GM12878 (cell line): ENCODE measurements at regions of chr5 and their contacts with region 1.

Region 1: DNA sequence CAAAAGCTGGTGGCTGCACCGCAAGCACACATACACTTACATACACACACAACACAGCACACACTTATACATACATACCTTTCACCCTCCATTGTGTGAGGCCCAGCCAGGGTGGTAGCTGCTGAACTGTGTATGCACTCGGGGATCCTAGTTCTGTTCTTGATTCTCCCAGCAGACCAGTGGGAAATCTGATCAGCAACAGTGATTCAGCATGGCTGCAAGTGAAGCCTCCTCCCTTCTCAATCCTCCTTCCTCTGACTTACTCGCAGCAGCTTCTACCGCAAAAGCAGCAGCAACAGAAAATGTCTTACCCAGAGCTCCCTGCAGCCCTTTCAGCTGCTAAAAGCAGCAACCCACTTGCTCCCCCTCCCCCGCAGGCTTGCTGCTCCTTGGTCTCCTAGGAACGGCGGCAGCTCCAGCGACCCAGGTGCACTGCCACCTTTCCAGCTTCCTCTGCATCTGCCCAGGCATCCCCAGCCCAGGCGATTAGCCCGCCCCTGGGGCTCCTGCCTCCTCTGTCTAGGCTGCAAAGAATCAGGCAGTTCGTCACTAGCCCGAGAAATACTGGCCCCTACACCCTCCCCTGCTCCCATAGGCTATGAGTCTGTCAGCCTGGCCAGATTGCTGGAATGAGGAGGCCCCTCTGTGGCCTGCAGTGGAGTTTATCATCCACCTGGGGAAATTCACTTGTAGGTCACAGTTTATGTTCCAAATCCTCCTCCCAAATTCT is at the start of gene KLHL3:
- DNase-seq: no peak
- ATAC-seq: peak; percentile 74
- H3K4me3 ChIP-seq: peak within 1 kb of the TSS; percentile 61
- H3K27ac ChIP-seq: peak within 1 kb of the TSS; percentile 86
- H3K4me1 ChIP-seq: peaks cover 15% of the 10 kb centered on the region
- H3K27me3 ChIP-seq: no peaks in the 10 kb centered on the region
- CTCF ChIP-seq: peak; percentile 7 to 44 (median 17); a peak in 3 of 6 replicates
- EP300 ChIP-seq: no peak
- POLR2A ChIP-seq: peak; percentile 52
- RAD21 ChIP-seq: peak; percentile 69
- polyA plus RNA-seq, gene KLHL3: 1.7 to 2.3 TPM

Region 2: DNA sequence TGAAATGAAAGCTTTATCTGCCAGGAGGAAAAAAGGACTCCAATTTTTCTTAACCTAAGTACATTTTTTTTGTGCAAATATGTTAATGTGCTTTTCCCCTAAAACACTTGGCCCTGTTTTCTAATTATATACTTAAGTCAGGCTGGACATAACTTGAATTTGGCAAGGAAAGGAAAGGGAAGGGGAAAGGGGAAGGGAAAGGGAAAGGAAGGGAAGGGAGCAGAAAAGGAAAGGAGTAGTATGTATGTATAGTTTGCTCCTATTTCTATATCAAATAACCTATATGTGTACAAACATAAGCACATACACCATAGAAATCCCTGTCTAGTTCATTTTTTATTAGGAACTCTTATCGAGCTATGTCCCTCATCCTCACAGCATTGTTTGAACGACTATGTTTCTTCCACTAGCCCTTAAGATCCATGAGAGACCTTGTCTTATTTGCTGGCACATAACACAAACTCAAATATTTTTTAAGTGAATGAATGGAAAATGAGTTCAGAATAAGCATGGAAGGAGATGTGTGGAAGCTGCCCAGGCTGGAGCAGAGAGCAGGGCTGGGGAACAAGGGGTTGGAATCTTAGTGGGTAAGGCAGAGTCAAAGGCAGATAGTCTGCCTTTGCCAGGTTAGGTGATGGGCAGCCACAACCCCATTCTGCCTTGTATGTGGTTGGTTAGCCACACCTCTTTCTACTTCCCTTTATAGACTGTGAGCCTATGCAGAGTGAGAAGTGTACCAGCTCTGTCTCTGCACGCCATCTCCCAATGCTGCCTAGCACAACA is 69.9 kb before region 1 on chr5:
- CTCF ChIA-PET with region 1: interaction called, 619 read pairs
- POLR2A ChIA-PET with region 1: interaction called, 3 read pairs
- RAD21 ChIA-PET with region 1: interaction called, 168 read pairs
- SMC1A ChIA-PET with region 1: interaction called, 155 read pairs
- in situ Hi-C with region 1: no loop called
- intact Hi-C with region 1: no loop called
- DNase-seq: peak; percentile 58
- ATAC-seq: peak; percentile 100
- H3K4me3 ChIP-seq: no peak overlapping the region
- H3K27ac ChIP-seq: peak overlapping the region; percentile 29
- H3K4me1 ChIP-seq: peaks cover 14% of the 10 kb centered on the region
- H3K27me3 ChIP-seq: no peaks in the 10 kb centered on the region
- CTCF ChIP-seq: no peak
- EP300 ChIP-seq: no peak
- POLR2A ChIP-seq: no peak
- RAD21 ChIP-seq: no peak

Region 3: GRCh38 chr5:139232147-139232724 is 1496.5 kb after region 1 on chr5:
- CTCF ChIA-PET with region 1: no interaction called
- POLR2A ChIA-PET with region 1: no interaction called
- RAD21 ChIA-PET with region 1: no interaction called
- SMC1A ChIA-PET with region 1: no interaction called
- in situ Hi-C with region 1: no loop called
- intact Hi-C with region 1: no loop called
- DNase-seq: peak; percentile 31
- ATAC-seq: peak; percentile 67
- H3K4me3 ChIP-seq: no peak overlapping the region
- H3K27ac ChIP-seq: no peak overlapping the region
- H3K4me1 ChIP-seq: no peaks in the 10 kb centered on the region
- H3K27me3 ChIP-seq: no peaks in the 10 kb centered on the region
- CTCF ChIP-seq: no peak
- EP300 ChIP-seq: no peak
- POLR2A ChIP-seq: no peak
- RAD21 ChIP-seq: no peak